ENCODE measurements at regions of chr20 and their contacts with region 1.

Region 1: DNA sequence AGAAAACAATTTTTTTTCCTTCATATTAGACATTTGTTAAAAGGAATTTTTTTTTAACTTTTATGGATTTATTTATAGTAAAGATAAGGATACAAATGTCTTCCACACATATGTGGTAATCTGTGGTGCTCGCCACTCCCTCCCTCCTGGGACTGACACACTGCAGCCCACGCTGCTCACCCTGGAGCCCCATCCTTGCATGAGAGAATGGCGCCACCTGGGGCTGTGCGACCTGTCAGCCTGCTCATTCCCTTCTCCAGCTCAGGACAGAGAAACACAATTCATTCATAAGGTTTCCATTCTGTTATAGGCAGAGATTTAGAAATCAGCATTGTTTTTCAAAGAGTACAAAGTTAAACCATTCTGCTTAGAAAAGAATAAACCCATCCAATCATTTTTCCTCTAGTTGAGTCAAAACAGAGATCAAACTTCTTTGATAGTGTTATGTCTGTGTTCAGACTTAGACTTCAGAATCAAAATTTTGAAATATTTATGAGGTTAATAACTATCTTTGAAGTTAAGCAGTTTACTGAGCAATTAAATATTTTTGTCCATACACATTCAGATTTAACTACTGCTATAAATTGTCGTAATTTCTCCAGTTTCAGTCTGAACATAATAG is 42.8 kb upstream of the DYNLRB1 start:
- DNase-seq: peak in 1 of 2 experiments; percentile 31
- H3K4me3 ChIP-seq: no peak overlapping the region
- H3K27ac ChIP-seq: no peak overlapping the region; the same call in 1 of the 2 replicates
- H3K4me1 ChIP-seq: peaks cover 8% of the 10 kb centered on the region; the same call in 1 of the 2 replicates
- H3K27me3 ChIP-seq: no peaks in the 10 kb centered on the region
- CTCF ChIP-seq: peak; percentile 35; the same call in 1 of the 2 replicates

Region 2: GRCh38 chr20:34485068-34485634 is 11.8 kb after region 1 on chr20:
- CTCF ChIA-PET with region 1: no interaction called
- POLR2A ChIA-PET with region 1: no interaction called
- intact Hi-C with region 1: no loop called
- DNase-seq: no peak
- H3K4me3 ChIP-seq: no peak overlapping the region
- H3K27ac ChIP-seq: no peak overlapping the region
- H3K4me1 ChIP-seq: no peaks in the 10 kb centered on the region
- H3K27me3 ChIP-seq: no peaks in the 10 kb centered on the region
- CTCF ChIP-seq: no peak

Region 3: GRCh38 chr20:34500823-34501222 is 27.4 kb after region 1 on chr20:
- CTCF ChIA-PET with region 1: no interaction called
- POLR2A ChIA-PET with region 1: no interaction called
- intact Hi-C with region 1: loop called (anchors 5 kb)
- DNase-seq: no peak
- H3K4me3 ChIP-seq: no peak overlapping the region
- H3K27ac ChIP-seq: no peak overlapping the region
- H3K4me1 ChIP-seq: no peaks in the 10 kb centered on the region
- H3K27me3 ChIP-seq: no peaks in the 10 kb centered on the region
- CTCF ChIP-seq: no peak

Region 4: DNA sequence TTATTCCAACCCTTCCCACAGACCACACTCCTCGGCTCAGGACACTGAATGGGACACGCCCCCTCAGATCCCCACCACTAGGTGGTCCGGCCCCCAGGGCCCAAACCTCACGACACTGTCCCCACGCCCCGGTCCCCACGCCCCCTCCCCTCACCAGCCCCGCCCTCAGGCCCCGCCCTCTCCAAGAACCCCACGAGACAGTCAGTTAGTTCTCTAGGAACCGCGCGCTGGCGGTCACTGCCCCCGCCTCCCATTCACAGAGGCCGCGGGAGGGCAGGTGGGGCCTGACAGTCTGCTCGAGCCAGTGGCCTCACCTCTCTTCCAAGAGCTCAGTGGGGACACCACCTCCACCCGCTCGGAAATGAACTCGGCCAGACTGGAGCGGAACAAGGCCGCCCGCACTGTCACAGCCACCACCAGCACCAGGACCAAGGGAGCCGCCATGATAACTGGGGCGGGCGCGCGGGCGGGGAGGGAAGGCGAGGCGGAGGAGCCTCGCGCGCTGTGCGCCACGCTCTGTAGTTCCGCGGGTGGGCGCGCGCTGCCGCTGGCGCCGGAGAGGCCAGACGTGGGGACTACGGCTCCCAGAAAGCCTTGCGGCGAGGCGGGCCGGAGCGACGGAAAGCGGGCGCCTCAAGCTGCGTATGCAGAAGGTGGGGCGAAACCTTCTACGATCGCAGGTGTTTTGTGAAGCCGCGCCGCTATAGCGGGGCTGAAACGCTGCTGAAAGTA is 203.4 kb after region 1 on chr20 and contains the start of gene PIGU:
- CTCF ChIA-PET with region 1: no interaction called
- POLR2A ChIA-PET with region 1: no interaction called
- intact Hi-C with region 1: no loop called
- DNase-seq: peak; percentile 83 to 98
- H3K4me3 ChIP-seq: peak within 1 kb of the TSS; percentile 68
- H3K27ac ChIP-seq: peak within 1 kb of the TSS; percentile 74
- H3K4me1 ChIP-seq: peaks cover 22% of the 10 kb centered on the region
- H3K27me3 ChIP-seq: no peaks in the 10 kb centered on the region
- CTCF ChIP-seq: no peak
- total RNA-seq, gene PIGU: 20.9 and 25.0 TPM in 2 replicates

Measured in PC-9 (cell line).